CD8-positive, alpha-beta T cell (primary cell): ENCODE measurements at regions of chr5 and their contacts with region 1.

Region 1: GRCh38 chr5:102583276-102584124 is 84.7 kb upstream of the SLCO6A1 start:
- DNase-seq: peak in 2 of 9 experiments; percentile 8 to 14
- ATAC-seq: no peak
- H3K4me3 ChIP-seq: no peak overlapping the region
- H3K4me3 Mint-ChIP-seq: no peak overlapping the region
- H3K27ac ChIP-seq: no peak overlapping the region
- H3K27ac Mint-ChIP-seq: no peak overlapping the region
- H3K4me1 ChIP-seq: no peaks in the 10 kb centered on the region
- H3K4me1 Mint-ChIP-seq: no peaks in the 10 kb centered on the region
- H3K27me3 ChIP-seq: no peaks in the 10 kb centered on the region
- H3K27me3 Mint-ChIP-seq: peaks cover 1% of the 10 kb centered on the region
- CTCF ChIP-seq: peak; percentile 47

Region 2: DNA sequence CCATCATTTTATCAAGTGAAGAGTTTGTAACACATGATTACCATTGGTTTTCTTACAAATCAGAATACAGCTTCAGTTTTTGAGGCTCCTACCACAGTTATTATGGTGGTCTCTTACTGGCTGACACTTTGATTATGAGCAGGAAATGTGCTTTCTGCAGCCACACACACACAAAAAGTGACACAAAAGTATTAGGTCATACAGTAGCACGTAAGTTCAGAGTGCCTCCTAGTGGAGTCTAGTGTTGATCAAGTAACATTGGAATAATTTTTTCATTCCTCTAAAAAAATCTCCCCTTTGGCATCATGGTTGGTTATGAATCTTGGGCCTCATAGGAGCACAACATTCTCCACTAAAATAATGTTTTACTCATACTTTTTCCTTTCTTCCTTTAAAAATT is 209.2 kb after region 1 on chr5:
- CTCF ChIA-PET with region 1: no interaction called
- POLR2A ChIA-PET with region 1: no interaction called
- intact Hi-C with region 1: loop called in 1 of 2 experiments (anchors 5 kb)
- DNase-seq: peak in 2 of 9 experiments; percentile 42 to 58
- ATAC-seq: peak; percentile 56
- H3K4me3 ChIP-seq: no peak overlapping the region
- H3K4me3 Mint-ChIP-seq: no peak overlapping the region
- H3K27ac ChIP-seq: no peak overlapping the region
- H3K27ac Mint-ChIP-seq: no peak overlapping the region
- H3K4me1 ChIP-seq: no peaks in the 10 kb centered on the region
- H3K4me1 Mint-ChIP-seq: peaks cover 15% of the 10 kb centered on the region
- H3K27me3 ChIP-seq: no peaks in the 10 kb centered on the region
- H3K27me3 Mint-ChIP-seq: no peaks in the 10 kb centered on the region
- CTCF ChIP-seq: no peak

Region 3: DNA sequence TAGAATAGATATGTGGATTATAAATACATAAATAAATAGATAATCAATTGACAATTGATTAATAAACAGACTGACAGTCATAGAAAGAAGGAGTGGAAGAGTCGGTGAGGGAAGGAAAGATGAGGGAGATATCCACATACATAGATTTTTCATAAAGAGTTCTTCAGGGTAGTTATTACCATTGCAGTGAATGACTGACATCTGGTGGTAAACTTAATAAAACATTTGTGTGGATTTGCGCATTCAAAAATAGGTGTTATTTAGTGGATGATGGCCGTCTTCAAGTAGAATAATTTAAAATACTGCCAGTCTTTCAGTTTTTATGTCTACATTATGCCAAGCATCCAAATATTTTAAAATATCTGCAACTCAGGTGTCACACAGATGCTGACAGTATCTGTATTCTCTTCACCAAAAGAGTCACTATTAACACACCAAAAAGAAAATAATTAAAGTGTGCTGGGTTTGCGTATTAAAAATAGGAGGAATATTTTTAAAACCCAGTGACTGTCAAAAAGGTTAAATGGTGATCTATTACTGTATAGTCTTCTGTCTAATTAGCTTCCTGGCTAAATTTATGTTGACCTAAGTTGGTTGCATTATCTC is 457.7 kb after region 1 on chr5:
- CTCF ChIA-PET with region 1: no interaction called
- POLR2A ChIA-PET with region 1: no interaction called
- intact Hi-C with region 1: loop called (anchors 1 to 5 kb)
- DNase-seq: peak in 2 of 9 experiments; percentile 44 to 58
- ATAC-seq: no peak
- H3K4me3 ChIP-seq: no peak overlapping the region
- H3K4me3 Mint-ChIP-seq: no peak overlapping the region
- H3K27ac ChIP-seq: no peak overlapping the region
- H3K27ac Mint-ChIP-seq: no peak overlapping the region
- H3K4me1 ChIP-seq: no peaks in the 10 kb centered on the region
- H3K4me1 Mint-ChIP-seq: no peaks in the 10 kb centered on the region
- H3K27me3 ChIP-seq: no peaks in the 10 kb centered on the region
- H3K27me3 Mint-ChIP-seq: peaks cover 2% of the 10 kb centered on the region
- CTCF ChIP-seq: peak; percentile 49

Region 4: DNA sequence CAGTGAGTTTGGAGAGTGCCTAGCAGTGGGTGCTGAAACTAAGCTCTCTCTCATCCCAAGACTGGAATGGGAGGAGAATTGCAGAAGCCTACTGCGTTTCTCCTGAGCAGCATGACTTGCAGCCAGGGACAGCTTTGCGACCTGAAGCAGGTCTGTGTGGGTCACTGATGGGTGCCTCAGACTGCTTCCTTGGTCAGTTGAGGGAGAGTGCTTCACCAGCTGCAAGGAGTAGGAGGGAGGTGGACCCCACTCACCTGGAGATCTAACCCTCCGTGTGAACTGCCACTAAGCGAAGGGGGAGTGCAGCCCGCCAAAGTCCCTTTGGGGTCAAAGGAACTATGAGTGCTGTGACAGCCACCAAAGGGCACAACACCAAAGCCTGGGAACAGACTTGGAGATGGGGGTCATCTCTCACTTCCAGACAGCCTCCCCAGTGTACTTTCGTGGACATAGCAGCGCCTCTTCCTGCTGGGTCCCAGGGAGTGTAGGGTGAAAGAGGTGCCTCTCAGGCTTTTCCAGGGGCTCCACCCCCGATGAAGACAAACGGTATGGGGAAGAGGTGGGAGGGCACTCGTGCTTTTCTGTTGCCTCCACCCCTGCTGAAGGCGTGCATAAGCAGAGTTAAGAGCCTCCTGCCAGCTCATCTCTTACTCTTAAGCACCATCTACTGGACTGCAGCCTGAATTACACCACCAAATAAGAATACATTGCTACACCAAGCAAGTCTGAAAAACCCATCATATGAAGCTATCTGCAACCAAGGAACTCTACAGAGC is 640.8 kb after region 1 on chr5:
- CTCF ChIA-PET with region 1: no interaction called
- POLR2A ChIA-PET with region 1: no interaction called
- intact Hi-C with region 1: loop called (anchors 5 kb)
- DNase-seq: peak in 8 of 9 experiments; percentile 1 to 70 (median 36)
- ATAC-seq: peak; percentile 99
- H3K4me3 ChIP-seq: no peak overlapping the region
- H3K4me3 Mint-ChIP-seq: no peak overlapping the region
- H3K27ac ChIP-seq: no peak overlapping the region
- H3K27ac Mint-ChIP-seq: no peak overlapping the region
- H3K4me1 ChIP-seq: no peaks in the 10 kb centered on the region
- H3K4me1 Mint-ChIP-seq: no peaks in the 10 kb centered on the region
- H3K27me3 ChIP-seq: no peaks in the 10 kb centered on the region
- H3K27me3 Mint-ChIP-seq: peaks cover 15% of the 10 kb centered on the region
- CTCF ChIP-seq: peak; percentile 70